ENCODE measurements at regions of chr15 and their contacts with region 1.

Region 1: GRCh38 chr15:44861439-44861910 is 95.0 kb upstream of the TERB2 start:
- DNase-seq: no peak
- H3K4me3 ChIP-seq: no peak overlapping the region
- H3K27ac ChIP-seq: no peak overlapping the region
- H3K4me1 ChIP-seq: no peaks in the 10 kb centered on the region
- H3K27me3 ChIP-seq: no peaks in the 10 kb centered on the region
- CTCF ChIP-seq: no peak

Region 2: GRCh38 chr15:44788748-44789147 is 72.7 kb before region 1 on chr15:
- intact Hi-C with region 1: no loop called
- DNase-seq: no peak
- H3K4me3 ChIP-seq: no peak overlapping the region
- H3K27ac ChIP-seq: no peak overlapping the region
- H3K4me1 ChIP-seq: no peaks in the 10 kb centered on the region
- H3K27me3 ChIP-seq: peaks cover 0 to 5% of the 10 kb centered on the region in 2 donors
- CTCF ChIP-seq: no peak

Region 3: DNA sequence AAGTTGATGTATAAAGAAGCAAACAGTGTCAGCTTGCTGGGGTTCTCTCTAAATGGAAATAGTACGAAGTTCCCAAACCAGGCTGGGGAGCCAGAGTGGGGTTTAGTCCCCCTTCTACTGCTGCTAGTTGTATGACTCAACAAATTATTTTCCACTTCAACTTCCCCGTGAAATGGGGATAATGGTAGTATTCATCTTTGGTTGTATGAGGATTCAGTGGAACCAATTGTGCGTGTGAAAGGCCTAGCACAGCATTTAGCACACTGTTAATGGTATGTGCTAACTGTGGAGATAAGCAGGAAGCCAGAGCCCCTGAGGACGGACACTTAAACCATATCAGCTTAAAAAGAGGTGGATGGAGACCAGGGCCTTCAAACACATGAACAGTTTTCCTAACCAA is 165.7 kb after region 1 on chr15:
- intact Hi-C with region 1: loop called (anchors 5 kb)
- DNase-seq: no peak
- H3K4me3 ChIP-seq: no peak overlapping the region
- H3K27ac ChIP-seq: no peak overlapping the region
- H3K4me1 ChIP-seq: peaks cover 0 to 16% (median 15%) of the 10 kb centered on the region in 4 donors
- H3K27me3 ChIP-seq: no peaks in the 10 kb centered on the region
- CTCF ChIP-seq: no peak